ENCODE measurements at regions of chr17 and their contacts with region 1.

Region 1: DNA sequence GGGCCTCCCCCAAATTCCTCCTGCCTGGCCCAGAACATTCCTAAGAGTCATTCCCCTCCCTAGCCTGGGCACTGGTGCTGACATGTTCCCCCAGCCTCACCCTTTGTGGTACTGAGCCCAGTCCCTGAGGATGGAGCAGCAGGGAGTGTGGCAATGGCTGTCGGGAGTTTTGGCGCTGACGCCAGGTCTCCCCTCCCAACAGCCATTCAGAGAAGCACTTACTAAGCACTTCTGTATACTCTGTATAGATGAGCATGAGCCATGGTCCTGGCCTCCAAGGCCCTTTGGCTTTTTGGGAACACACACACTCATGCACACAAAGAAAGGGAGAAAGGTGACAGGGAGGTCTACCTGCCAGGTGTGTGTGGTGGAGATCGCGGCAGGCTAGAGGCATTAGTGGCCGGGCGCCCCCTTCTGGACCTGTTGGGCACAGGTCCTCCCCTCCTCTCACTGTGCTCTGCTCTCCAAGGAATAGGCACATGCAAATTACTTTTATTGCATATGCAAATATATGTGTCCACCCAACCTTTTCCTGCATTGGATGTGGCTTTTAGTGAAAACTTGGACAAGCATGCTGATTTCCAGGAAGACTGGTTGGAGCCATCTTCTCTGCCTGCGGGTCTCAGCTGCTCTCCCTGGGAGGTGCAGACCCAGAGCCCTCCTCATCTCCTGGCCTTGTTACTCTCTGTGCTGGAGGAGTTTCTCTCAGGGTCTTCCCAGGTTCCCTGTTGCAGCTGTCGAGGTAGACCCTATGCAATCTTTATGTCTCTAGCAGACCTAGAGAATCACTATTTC is 17.4 kb upstream of the C17orf107 start:
- DNase-seq: no peak

Region 2: DNA sequence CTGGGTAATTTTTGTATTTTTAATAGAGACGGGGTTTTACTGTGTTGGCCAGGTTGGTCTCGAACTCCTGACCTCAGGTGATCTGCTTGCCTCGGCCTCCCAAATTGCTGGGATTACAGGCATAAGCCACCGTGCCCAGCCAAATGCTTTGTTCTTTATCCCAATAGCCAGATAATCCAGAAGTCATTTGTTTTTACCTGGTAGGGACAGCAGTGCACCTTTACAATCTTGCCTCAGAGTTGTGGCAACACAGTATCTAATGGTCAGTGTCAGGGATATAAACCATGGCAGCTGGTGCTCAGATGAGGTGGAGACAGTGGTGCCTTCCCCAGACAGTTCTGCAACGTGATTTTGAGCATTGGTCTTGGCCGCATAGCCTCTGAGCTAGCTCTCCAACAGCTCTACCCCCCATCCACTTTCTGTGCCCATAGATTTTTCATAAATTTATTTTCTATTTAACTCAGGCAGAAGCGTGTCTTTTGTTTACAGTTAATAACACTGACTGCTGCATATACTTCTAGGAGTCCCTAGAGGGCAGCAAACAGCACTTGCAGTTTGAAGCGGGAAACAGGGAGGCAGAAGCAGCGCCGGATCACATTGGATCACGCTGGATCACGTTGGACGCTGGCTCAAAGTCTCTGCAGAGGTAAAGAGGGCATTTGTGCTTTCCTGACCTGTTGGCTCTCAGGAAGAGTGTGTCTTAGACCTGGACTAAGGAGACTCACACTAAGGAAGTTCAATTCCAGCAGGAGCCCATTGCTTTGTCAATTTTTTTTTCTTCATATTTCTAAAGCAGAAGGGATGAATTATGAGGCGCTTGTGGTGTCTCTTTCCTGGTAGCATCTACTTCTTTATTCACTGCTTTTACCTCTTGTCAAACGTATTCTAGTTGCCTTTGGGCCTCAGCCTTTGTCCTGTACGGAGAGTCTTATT is 316.5 kb before region 1 on chr17:
- intact Hi-C with region 1: loop called (anchors 10 kb)
- DNase-seq: peak; percentile 81

Region 3: DNA sequence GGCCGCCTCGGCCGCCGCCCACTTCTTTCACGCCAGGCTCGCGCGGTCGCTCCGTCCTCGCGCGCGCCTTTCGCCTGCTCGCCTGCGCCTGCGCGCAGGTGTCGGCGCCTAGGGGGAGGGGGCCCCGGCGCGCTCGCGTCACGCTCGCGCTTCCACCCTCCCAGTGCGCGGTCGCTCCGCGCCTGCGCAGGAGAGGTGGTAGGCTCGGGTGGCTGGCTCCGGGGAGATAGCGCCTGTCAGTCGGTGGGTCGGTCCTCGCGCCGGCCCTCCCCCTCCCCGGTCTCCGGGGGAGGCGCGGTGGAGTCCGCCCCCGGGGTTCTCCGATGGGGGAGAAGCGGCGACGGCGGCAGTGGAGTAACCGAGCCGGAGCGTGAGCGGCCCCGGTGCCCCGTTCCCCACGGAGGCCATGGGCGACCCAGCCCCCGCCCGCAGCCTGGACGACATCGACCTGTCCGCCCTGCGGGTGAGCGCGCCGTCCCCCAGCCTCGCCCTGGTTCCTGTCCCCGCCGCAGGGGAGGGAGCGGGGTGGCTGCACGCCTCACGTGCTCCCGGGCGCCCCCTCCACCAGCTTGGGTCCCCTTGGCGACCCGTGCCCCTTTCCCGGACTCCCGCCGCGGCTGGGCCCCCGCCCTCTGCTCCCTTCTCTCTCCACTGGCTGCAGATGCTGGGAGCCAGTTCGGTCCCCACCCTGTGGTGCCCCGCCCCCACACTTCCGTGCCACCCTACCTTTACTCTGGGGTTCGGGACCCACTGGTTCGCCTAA is 48.6 kb before region 1 on chr17 and contains the start of gene MINK1:
- intact Hi-C with region 1: loop called (anchors 5 kb)
- DNase-seq: peak; percentile 95
- total RNA-seq, gene MINK1: 44.0 TPM

Region 4: DNA sequence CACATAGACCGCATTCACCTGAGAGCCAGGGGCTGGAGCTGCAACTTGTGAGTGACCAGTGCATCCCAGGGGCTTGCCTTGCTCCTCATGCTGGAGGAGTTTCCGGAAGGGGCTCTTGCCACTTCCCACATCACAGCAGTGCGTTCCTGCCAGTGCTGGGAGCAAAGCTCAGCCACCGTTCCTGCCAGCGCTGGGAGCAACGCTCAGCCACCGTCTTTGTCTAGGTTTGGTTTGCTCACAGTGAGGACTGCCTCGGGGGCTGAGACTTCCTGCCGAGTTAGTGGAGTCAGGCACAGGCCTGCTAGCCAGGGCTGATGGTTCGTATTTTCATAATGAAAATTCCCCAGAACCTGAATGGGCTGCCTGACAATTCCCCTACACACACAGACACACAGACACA is 26.3 kb after region 1 on chr17:
- intact Hi-C with region 1: no loop called
- DNase-seq: no peak

Region 5: DNA sequence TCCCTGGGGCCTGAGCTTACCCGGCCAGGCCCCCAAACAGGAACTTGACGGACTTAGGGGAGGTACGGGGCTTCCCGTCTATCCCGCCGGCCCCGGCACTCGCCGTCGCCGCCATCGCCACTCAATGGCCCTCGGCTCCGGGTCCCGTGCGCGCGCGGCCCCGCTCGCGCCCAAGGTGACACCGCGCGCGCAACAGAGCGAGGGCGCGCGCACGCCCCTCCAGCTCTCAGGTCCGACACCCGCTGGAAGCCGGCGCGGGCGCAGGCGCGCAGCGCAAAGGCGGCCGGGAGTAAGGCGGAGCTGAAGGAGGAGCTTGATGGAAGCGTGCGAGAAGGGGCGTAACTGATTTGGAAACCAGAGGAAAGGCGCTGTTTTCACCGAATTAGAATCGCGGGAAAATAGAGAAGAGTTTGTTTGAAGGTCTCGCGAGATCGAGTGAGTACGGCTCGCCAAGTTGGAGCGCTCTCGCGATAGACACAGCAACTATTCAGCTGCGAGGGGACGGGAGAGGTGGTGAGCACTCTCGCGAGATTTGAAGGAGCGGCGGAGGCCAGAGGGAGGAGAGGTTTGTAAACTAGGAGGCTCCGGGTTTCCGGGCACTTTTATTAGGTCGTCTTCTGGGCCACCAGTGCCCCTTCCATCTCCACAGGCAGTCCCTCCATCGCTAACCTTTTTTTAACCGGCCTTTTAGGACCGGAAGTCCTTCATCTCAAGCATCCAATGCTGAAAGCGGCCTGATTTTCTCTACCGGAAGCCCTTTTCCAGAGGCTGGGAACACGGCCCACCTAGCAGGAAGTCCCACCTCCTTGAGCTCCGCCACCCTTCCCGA is 58.1 kb after region 1 on chr17 and contains the starts of genes RNF167 and SLC25A11:
- intact Hi-C with region 1: no loop called
- DNase-seq: peak; percentile 97
- total RNA-seq, gene RNF167: 84.7 TPM
- total RNA-seq, gene SLC25A11: 176 TPM

Measured in cardiac septum (tissue), 1 donor.